B cell (primary cell): ENCODE measurements at regions of chr6 and their contacts with region 1.

Region 1: GRCh38 chr6:15691250-15691869 is 28.5 kb upstream of the DTNBP1 start:
- DNase-seq: peak; percentile 91
- ATAC-seq: peak; percentile 100
- H3K4me3 ChIP-seq: no peak overlapping the region
- H3K4me3 Mint-ChIP-seq: peak overlapping the region; percentile 39
- H3K27ac ChIP-seq: peak overlapping the region in 1 of 2 donors; percentile 34
- H3K27ac Mint-ChIP-seq: peak overlapping the region; percentile 76
- H3K4me1 ChIP-seq: peaks cover 3 to 8% of the 10 kb centered on the region in 2 donors
- H3K4me1 Mint-ChIP-seq: peaks cover 8% of the 10 kb centered on the region
- H3K27me3 ChIP-seq: peaks cover 0 to 3% (median 0%) of the 10 kb centered on the region in 4 experiments
- H3K27me3 Mint-ChIP-seq: no peaks in the 10 kb centered on the region
- CTCF ChIP-seq: peak; percentile 100

Region 2: DNA sequence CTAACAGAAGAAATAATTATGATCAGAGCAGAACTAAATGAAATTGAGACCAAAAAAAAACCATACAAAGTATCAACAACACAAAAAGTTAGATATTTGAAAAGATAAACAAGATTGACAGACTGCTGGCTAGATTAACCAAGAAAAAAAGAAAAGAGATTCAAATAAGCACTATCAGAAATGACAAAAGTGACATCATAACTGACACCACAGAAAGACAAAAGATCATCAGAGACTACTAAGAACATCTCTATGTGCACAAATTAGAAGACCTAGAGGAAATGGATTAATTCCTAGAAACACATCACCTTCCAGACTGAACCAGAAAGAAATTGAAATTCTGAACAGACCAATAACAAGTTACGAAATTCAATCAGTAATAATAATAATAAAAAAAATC is 46.5 kb before region 1 on chr6:
- CTCF ChIA-PET with region 1: no interaction called
- POLR2A ChIA-PET with region 1: no interaction called
- intact Hi-C with region 1: no loop called
- DNase-seq: no peak
- ATAC-seq: no peak
- H3K4me3 ChIP-seq: no peak overlapping the region
- H3K4me3 Mint-ChIP-seq: no peak overlapping the region
- H3K27ac ChIP-seq: no peak overlapping the region
- H3K27ac Mint-ChIP-seq: no peak overlapping the region
- H3K4me1 ChIP-seq: no peaks in the 10 kb centered on the region
- H3K4me1 Mint-ChIP-seq: peaks cover 40% of the 10 kb centered on the region
- H3K27me3 ChIP-seq: no peaks in the 10 kb centered on the region
- H3K27me3 Mint-ChIP-seq: no peaks in the 10 kb centered on the region
- CTCF ChIP-seq: no peak

Region 3: DNA sequence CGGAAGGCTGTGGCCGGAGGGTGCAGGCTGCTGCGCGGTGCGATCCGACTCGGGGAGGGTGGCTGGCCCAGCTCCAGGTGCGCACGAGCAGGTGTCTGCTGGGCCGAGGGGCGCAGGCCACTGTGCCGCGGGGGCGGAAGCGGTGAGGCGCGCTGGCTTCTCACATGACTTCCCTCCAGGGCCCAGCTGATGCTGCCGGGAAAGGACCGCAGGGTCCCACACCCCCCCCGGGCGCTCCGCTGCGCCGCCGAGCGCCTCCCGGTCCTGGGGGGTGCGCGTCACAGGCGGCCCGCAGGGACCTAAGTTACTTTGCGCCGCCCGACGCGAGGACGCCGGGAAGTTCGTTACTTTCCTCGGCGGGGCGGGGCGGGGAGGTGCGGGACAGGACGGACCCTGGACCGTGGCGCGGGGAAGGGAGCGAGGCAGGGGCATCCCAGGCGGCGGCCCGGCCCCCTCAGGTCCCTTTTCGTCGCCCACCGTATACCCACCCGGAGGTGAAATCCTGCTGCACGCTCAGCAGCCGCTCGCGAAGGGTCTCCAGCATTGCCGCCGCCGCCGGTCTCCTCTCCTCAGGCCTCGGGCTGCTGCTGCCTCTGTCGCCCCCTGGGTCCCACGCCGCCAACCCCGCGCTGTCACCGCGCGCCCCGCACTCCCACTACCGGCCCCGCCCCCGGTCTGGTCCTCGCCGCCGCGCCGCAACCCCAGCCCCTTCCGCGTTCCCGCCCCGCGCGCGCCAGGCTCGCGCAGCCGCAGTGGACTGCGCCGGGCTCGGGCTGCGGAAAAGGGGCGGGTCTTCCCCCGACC is 28.8 kb before region 1 on chr6 and contains the start of gene DTNBP1:
- CTCF ChIA-PET with region 1: interaction called, 5 read pairs
- POLR2A ChIA-PET with region 1: no interaction called
- intact Hi-C with region 1: loop called (anchors 1 kb)
- DNase-seq: peak; percentile 95
- ATAC-seq: peak; percentile 73
- H3K4me3 ChIP-seq: peak within 1 kb of the TSS; percentile 50 to 97 (median 78)
- H3K4me3 Mint-ChIP-seq: peak within 1 kb of the TSS; percentile 94
- H3K27ac ChIP-seq: peak within 1 kb of the TSS; percentile 91 to 97
- H3K27ac Mint-ChIP-seq: peak within 1 kb of the TSS; percentile 95
- H3K4me1 ChIP-seq: peaks cover 36 to 49% of the 10 kb centered on the region in 2 donors
- H3K4me1 Mint-ChIP-seq: peaks cover 51% of the 10 kb centered on the region
- H3K27me3 ChIP-seq: no peaks in the 10 kb centered on the region
- H3K27me3 Mint-ChIP-seq: no peaks in the 10 kb centered on the region
- CTCF ChIP-seq: no peak
- total RNA-seq, gene DTNBP1: 73.0 and 73.6 TPM in 2 replicates

Region 4: DNA sequence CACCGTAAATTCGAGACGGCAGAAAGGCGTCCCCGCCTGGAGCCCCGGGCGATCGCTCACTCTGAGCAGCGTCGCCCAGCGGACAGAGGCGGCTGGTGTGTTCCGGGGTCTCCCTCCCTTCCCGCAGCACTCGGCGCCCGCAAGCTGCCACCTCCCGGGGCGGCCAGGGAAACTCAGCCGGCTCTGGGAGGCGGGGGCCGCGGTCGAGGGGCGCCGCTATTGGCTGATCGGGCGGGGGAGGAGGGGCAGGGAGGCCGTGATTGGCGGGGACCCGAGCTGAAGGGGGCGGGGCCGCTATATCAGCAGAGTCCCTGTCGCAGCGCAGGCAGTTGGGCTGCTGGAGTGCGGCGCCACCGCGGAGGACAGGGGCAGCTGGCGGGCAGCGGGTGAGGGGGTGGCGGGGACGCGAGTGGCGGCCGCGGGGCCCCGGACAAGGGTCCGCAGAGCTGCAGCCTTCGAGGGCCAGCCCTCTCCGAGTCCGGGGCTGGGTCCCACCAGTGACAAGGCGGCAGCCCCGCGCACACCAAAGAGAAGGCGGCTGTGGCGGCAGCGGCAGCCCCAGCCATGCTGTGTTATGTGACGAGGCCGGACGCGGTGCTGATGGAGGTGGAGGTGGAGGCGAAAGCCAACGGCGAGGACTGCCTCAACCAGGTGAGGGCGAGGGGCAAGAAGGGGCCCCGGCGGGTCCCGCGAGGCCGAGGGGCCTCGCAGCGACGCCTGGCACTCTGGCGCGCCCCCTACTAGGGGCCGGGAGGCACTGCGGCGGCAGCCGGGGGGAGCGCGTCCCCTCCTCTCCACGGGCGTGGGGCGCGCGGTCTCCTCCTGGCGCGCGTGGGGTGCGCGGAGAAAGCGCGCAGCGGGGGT is 437.6 kb after region 1 on chr6 and contains the start of gene MYLIP:
- CTCF ChIA-PET with region 1: interaction called, 123 read pairs
- POLR2A ChIA-PET with region 1: interaction called, 5 read pairs
- intact Hi-C with region 1: loop called (anchors 1 kb)
- DNase-seq: peak; percentile 98
- ATAC-seq: peak; percentile 86
- H3K4me3 ChIP-seq: peak within 1 kb of the TSS; percentile 82 to 99 (median 94)
- H3K4me3 Mint-ChIP-seq: peak within 1 kb of the TSS; percentile 96
- H3K27ac ChIP-seq: peak within 1 kb of the TSS; percentile 92 to 95
- H3K27ac Mint-ChIP-seq: peak within 1 kb of the TSS; percentile 94
- H3K4me1 ChIP-seq: peaks cover 28 to 44% of the 10 kb centered on the region in 2 donors
- H3K4me1 Mint-ChIP-seq: peaks cover 50% of the 10 kb centered on the region
- H3K27me3 ChIP-seq: no peaks in the 10 kb centered on the region
- H3K27me3 Mint-ChIP-seq: peaks cover 6% of the 10 kb centered on the region
- CTCF ChIP-seq: peak; percentile 65
- total RNA-seq, gene MYLIP: 37.3 and 40.6 TPM in 2 replicates

Region 5: GRCh38 chr6:16168858-16169257 is 477.5 kb after region 1 on chr6:
- CTCF ChIA-PET with region 1: interaction called, 17 read pairs
- POLR2A ChIA-PET with region 1: no interaction called
- intact Hi-C with region 1: loop called (anchors 1 kb)
- DNase-seq: peak; percentile 49
- ATAC-seq: no peak
- H3K4me3 ChIP-seq: no peak overlapping the region
- H3K4me3 Mint-ChIP-seq: no peak overlapping the region
- H3K27ac ChIP-seq: no peak overlapping the region
- H3K27ac Mint-ChIP-seq: no peak overlapping the region
- H3K4me1 ChIP-seq: no peaks in the 10 kb centered on the region
- H3K4me1 Mint-ChIP-seq: peaks cover 3% of the 10 kb centered on the region
- H3K27me3 ChIP-seq: peaks cover 0 to 3% (median 0%) of the 10 kb centered on the region in 4 experiments
- H3K27me3 Mint-ChIP-seq: peaks cover 15% of the 10 kb centered on the region
- CTCF ChIP-seq: peak; percentile 59

Region 6: DNA sequence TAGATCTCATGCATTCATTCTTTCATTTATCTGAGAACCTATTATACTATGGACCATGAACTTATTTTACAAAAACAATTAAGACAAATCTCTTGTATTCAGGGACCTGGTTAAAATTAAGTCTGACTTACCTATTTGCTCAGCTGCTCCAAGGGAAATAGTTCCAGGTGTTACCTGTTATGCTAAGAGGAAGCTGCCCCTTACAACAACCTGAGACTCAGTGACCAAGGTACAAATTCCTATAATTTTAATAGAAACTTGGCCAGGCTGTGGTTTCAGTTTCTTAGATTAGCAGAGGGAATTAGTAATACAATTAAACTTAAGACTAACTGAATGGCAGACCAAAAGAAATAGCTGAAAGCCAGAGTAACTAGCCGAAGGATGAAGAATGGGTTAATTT is 498.9 kb after region 1 on chr6:
- CTCF ChIA-PET with region 1: interaction called, 37 read pairs
- POLR2A ChIA-PET with region 1: no interaction called
- intact Hi-C with region 1: no loop called
- DNase-seq: no peak
- ATAC-seq: no peak
- H3K4me3 ChIP-seq: no peak overlapping the region
- H3K4me3 Mint-ChIP-seq: no peak overlapping the region
- H3K27ac ChIP-seq: no peak overlapping the region
- H3K27ac Mint-ChIP-seq: no peak overlapping the region
- H3K4me1 ChIP-seq: no peaks in the 10 kb centered on the region
- H3K4me1 Mint-ChIP-seq: no peaks in the 10 kb centered on the region
- H3K27me3 ChIP-seq: peaks cover 0 to 8% (median 3%) of the 10 kb centered on the region in 4 experiments
- H3K27me3 Mint-ChIP-seq: peaks cover 22% of the 10 kb centered on the region
- CTCF ChIP-seq: no peak